ENCODE measurements at regions of chr4 and their contacts with region 1.

Region 1: GRCh38 chr4:64407000-64407399 is 2.2 kb downstream of the TECRL start:
- DNase-seq: no peak
- ATAC-seq: no peak
- H3K4me3 ChIP-seq: peak overlapping the region; percentile 3 to 61 (median 51)
- H3K27ac ChIP-seq: peak overlapping the region in 11 of 12 donors; percentile 19 to 85 (median 73)
- H3K4me1 ChIP-seq: no peaks in the 10 kb centered on the region
- H3K27me3 ChIP-seq: no peaks in the 10 kb centered on the region
- CTCF ChIP-seq: no peak
- POLR2A ChIP-seq: no peak

Region 2: DNA sequence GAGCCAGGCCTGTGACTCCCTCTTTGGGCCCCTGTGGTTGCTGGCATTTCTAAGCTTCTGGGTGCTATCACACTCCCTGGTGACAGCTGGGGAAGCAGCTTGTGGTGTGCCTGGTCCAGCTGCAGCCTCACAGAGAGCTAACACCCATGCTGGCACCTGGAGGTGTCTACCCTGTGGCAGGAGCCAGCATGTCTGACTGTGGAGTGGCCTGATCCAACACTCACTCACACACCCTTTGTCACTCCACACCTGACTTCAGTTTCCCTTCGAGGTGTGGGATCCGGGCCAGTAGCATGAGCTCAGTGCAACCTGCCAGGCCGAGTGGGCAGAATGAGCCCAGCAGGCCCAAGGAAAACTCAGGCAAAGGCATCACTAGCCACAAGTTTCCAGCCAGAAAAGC is 65.3 kb before region 1 on chr4:
- intact Hi-C with region 1: loop called in 2 of 10 experiments (anchors 5 to 10 kb)
- DNase-seq: peak; percentile 76 to 93 (median 81)
- ATAC-seq: peak; percentile 96 to 98 (median 96)
- H3K4me3 ChIP-seq: peak overlapping the region in 1 of 12 donors; percentile 4
- H3K27ac ChIP-seq: peak overlapping the region in 9 of 12 donors; percentile 43 to 86 (median 66)
- H3K4me1 ChIP-seq: peaks cover 0 to 41% (median 14%) of the 10 kb centered on the region in 12 donors
- H3K27me3 ChIP-seq: no peaks in the 10 kb centered on the region
- CTCF ChIP-seq: no peak
- POLR2A ChIP-seq: no peak

Region 3: GRCh38 chr4:64368741-64369140 is 38.3 kb before region 1 on chr4:
- intact Hi-C with region 1: no loop called
- DNase-seq: no peak
- ATAC-seq: no peak
- H3K4me3 ChIP-seq: no peak overlapping the region
- H3K27ac ChIP-seq: no peak overlapping the region
- H3K4me1 ChIP-seq: peaks cover 0 to 16% (median 0%) of the 10 kb centered on the region in 12 donors
- H3K27me3 ChIP-seq: no peaks in the 10 kb centered on the region
- CTCF ChIP-seq: no peak
- POLR2A ChIP-seq: no peak

Region 4: GRCh38 chr4:64489628-64490027 is 82.6 kb after region 1 on chr4:
- intact Hi-C with region 1: loop called in 3 of 10 experiments (anchors 2 to 10 kb)
- DNase-seq: no peak
- ATAC-seq: peak in 3 of 4 donors; percentile 28 to 52 (median 39)
- H3K4me3 ChIP-seq: peak overlapping the region in 1 of 12 donors; percentile 11
- H3K27ac ChIP-seq: peak overlapping the region in 5 of 12 donors; percentile 10 to 60 (median 42)
- H3K4me1 ChIP-seq: no peaks in the 10 kb centered on the region
- H3K27me3 ChIP-seq: no peaks in the 10 kb centered on the region
- CTCF ChIP-seq: no peak
- POLR2A ChIP-seq: no peak

Region 5: DNA sequence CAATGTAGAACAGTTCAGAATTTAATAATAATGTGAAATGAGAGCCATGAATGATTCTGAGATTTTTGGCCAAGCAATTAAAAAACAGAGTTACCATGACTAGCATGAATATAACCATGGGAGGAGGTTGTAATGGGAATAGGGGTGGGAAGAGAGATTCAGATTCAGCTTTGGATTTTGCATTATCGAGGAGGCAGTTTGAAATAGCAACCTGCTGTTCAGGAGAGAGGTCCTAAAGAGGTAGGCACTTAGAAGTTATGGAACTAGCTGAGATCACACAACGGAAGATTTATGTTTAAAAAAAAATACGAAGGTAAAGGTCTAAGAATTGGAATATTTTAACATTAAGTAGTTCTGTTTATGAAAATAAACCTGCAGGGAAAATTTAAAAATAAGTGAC is 126.6 kb after region 1 on chr4:
- intact Hi-C with region 1: loop called in 8 of 10 experiments (anchors 2 to 10 kb)
- DNase-seq: no peak
- ATAC-seq: peak in 2 of 4 donors; percentile 24 to 44
- H3K4me3 ChIP-seq: peak overlapping the region in 3 of 12 donors; percentile 17 to 31 (median 26)
- H3K27ac ChIP-seq: peak overlapping the region in 8 of 12 donors; percentile 19 to 59 (median 44)
- H3K4me1 ChIP-seq: peaks cover 0 to 3% (median 0%) of the 10 kb centered on the region in 12 donors
- H3K27me3 ChIP-seq: no peaks in the 10 kb centered on the region
- CTCF ChIP-seq: no peak
- POLR2A ChIP-seq: no peak

Region 6: GRCh38 chr4:64642936-64643335 is 235.9 kb after region 1 on chr4:
- intact Hi-C with region 1: no loop called
- DNase-seq: no peak
- ATAC-seq: no peak
- H3K4me3 ChIP-seq: no peak overlapping the region
- H3K27ac ChIP-seq: no peak overlapping the region
- H3K4me1 ChIP-seq: no peaks in the 10 kb centered on the region
- H3K27me3 ChIP-seq: no peaks in the 10 kb centered on the region
- CTCF ChIP-seq: no peak
- POLR2A ChIP-seq: no peak

Measured in heart left ventricle (tissue), 16 donors.